ENCODE measurements at regions of chr11 and their contacts with region 1.

Region 1: DNA sequence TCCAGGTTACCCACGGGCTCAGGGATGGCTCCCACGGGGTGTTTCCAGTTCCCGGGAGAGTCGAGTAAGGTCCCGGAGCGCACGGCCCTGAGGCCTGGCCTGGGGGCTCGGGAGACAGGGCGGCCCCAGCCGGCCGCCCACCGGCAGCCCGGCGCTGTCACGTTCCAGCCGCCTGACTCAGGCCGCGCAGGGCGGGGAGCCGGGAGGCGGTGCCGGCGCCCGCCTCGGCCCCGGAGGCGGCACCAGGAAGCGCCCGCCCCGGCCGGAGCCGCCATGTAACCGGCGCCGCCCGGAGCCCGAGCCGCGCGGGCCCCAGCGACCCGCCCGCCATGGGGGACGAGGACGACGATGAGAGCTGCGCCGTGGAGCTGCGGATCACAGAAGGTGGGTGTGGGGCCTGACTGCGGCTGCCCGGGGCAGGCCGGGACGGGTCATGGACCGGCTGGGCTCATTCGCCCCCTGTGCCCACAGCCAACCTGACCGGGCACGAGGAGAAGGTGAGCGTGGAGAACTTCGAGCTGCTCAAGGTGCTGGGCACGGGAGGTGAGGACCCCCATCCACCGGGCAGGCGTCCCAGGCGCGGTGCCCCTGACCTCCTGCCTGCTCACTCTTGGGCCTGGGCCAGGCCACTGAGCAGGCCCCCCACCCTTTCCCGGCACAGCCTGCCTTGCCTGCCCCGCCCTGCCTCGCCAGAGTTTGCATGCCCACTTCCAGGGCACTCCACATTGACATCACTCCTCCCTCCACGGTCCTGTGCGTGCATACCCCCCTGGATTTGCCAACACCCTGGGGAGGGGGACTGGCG is at the start of gene RPS6KA4:
- DNase-seq: peak; percentile 82
- ATAC-seq: peak; percentile 69
- H3K4me3 ChIP-seq: peak within 1 kb of the TSS; percentile 92
- H3K27ac ChIP-seq: peak within 1 kb of the TSS; percentile 40
- H3K4me1 ChIP-seq: peaks cover 36% of the 10 kb centered on the region
- H3K27me3 ChIP-seq: no peaks in the 10 kb centered on the region
- CTCF ChIP-seq: no peak; the same call in 1 of the 2 replicates
- total RNA-seq, gene RPS6KA4: 148 and 189 TPM in 2 replicates

Region 2: GRCh38 chr11:64269380-64270234 is 89.5 kb before region 1 on chr11:
- CTCF ChIA-PET with region 1: no interaction called
- POLR2A ChIA-PET with region 1: interaction called, 10 read pairs
- intact Hi-C with region 1: no loop called
- DNase-seq: peak; percentile 100
- ATAC-seq: peak; percentile 80
- H3K4me3 ChIP-seq: peak overlapping the region; percentile 69
- H3K27ac ChIP-seq: peak overlapping the region; percentile 83
- H3K4me1 ChIP-seq: peaks cover 35% of the 10 kb centered on the region
- H3K27me3 ChIP-seq: no peaks in the 10 kb centered on the region
- CTCF ChIP-seq: no peak

Region 3: GRCh38 chr11:64317957-64318693 is 41.0 kb before region 1 on chr11 and contains the start of gene PRDX5:
- CTCF ChIA-PET with region 1: interaction called, 106 read pairs
- POLR2A ChIA-PET with region 1: interaction called, 14 read pairs
- intact Hi-C with region 1: loop called (anchors 1 kb)
- DNase-seq: peak; percentile 99
- ATAC-seq: peak; percentile 76
- H3K4me3 ChIP-seq: peak within 1 kb of the TSS; percentile 83
- H3K27ac ChIP-seq: peak within 1 kb of the TSS; percentile 94
- H3K4me1 ChIP-seq: peaks cover 28% of the 10 kb centered on the region
- H3K27me3 ChIP-seq: no peaks in the 10 kb centered on the region
- CTCF ChIP-seq: peak; percentile 60
- total RNA-seq, gene PRDX5: 467 and 585 TPM in 2 replicates

Region 4: DNA sequence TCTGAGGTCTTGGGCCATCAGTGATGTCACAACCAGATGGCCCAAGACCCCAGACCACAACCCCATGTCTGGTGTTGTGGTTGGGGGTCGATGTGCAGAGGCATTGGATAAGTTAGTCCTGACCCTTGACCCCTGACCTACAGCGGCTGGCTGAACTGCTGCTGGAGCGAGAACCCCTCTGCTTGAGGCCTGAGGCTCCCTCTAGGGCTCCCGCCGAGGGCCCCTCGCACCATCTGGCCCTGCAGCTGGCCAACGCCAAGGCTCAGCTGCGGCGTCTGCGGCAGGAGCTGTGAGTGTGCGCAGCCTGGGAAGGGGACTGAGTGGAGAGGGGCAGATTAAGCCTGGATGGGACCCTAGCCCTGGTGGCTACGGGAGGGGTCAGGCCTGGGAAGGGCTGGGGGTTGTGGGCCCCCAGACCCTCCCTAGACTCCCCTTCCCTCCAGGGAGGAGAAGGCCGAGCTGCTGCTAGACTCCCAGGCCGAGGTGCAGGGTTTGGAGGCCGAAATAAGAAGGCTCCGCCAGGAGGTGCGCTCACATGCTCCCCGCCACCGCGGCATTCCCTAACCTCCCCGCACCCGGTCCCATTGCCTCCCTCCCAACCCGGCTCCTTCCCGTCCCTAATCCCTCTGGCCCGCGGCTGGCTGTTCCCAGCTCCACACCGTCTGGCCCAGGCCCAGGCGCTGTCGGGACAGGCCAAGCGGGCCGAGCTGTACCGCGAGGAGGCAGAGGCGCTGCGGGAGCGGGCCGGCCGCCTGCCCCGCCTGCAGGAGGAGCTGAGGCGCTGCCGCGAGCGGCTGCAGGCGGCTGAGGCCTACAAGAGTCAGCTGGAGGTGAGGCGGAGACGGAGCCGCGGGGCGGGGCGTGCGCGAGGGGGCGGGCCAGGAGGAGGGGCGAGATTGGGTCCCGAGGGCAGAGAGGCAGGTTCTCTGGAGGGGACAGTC is 17.0 kb before region 1 on chr11:
- CTCF ChIA-PET with region 1: interaction called, 22 read pairs
- POLR2A ChIA-PET with region 1: interaction called, 4 read pairs
- intact Hi-C with region 1: no loop called
- DNase-seq: peak; percentile 96
- ATAC-seq: peak; percentile 96
- H3K4me3 ChIP-seq: peak overlapping the region; percentile 65
- H3K27ac ChIP-seq: 0 out of 2 replicates have a peak overlapping the region, but pooled peaks have one; percentile 12
- H3K4me1 ChIP-seq: peaks cover 8% of the 10 kb centered on the region
- H3K27me3 ChIP-seq: no peaks in the 10 kb centered on the region
- CTCF ChIP-seq: peak; percentile 61

Region 5: DNA sequence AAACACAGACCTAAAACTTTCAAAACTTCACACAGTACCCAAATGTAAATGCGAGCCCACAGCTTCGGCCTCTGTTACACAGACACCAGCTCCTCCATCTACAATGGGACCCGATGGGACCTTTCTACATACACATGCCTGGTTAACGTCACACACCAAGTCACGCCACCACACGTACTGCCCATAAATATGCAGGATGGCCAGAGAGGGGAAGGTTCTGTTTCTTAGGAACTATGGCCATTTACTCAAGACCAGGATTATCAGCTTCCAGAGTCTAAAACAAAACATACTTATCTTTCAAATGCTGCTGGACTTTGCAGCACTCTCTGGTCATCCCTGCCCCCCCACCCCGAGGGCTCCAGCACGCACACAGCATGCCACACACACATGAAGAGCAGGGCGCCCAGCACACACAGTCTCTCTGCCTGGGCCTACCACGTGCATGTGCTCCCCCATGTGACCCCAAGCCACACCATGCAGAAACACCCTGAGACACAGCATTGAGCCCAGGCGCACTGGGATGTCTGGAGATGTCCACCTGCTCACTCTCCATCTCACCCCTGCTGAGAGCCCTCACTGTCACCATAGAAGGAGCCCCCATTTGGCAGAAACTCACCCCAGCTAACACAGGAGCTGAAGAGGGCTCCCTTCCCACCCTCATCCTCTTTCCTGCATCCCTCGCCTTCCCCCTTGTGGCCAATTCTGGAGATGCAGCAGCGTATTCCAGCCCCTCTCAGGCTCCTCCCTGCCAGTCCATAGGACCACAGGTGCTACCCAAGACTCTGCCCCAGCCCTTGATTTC is 293.7 kb after region 1 on chr11:
- CTCF ChIA-PET with region 1: interaction called, 6 read pairs
- POLR2A ChIA-PET with region 1: no interaction called
- intact Hi-C with region 1: loop called (anchors 5 kb)
- DNase-seq: peak; percentile 93
- ATAC-seq: peak; percentile 91
- H3K4me3 ChIP-seq: no peak overlapping the region
- H3K27ac ChIP-seq: no peak overlapping the region
- H3K4me1 ChIP-seq: no peaks in the 10 kb centered on the region
- H3K27me3 ChIP-seq: no peaks in the 10 kb centered on the region
- CTCF ChIP-seq: peak; percentile 94

Measured in PC-3 (cell line).